Panc1 (cell line): ENCODE measurements at regions of chr6 and their contacts with region 1.

Region 1: GRCh38 chr6:131914967-131915751 is 36.0 kb downstream of the CCN2 start:
- DNase-seq: peak; percentile 53
- ATAC-seq: peak; percentile 92
- H3K4me3 ChIP-seq: no peak overlapping the region
- H3K27ac ChIP-seq: no peak overlapping the region
- H3K4me1 ChIP-seq: no peaks in the 10 kb centered on the region; the same call in 1 of the 2 replicates
- H3K27me3 ChIP-seq: peaks cover 11% of the 10 kb centered on the region; the same call in 1 of the 2 replicates
- CTCF ChIP-seq: peak; percentile 87

Region 2: GRCh38 chr6:131844243-131844841 is 70.8 kb before region 1 on chr6:
- CTCF ChIA-PET with region 1: no interaction called
- POLR2A ChIA-PET with region 1: interaction called, 12 read pairs
- in situ Hi-C with region 1: no loop called
- intact Hi-C with region 1: no loop called
- DNase-seq: peak; percentile 39
- ATAC-seq: no peak
- H3K4me3 ChIP-seq: no peak overlapping the region
- H3K27ac ChIP-seq: no peak overlapping the region
- H3K4me1 ChIP-seq: no peaks in the 10 kb centered on the region
- H3K27me3 ChIP-seq: no peaks in the 10 kb centered on the region
- CTCF ChIP-seq: no peak